ENCODE measurements at regions of chr18 and their contacts with region 1.

Region 1: GRCh38 chr18:8359076-8359475 is 250.2 kb upstream of the RAB12 start:
- DNase-seq: no peak
- H3K4me3 Mint-ChIP-seq: no peak overlapping the region
- H3K27ac Mint-ChIP-seq: no peak overlapping the region
- H3K4me1 Mint-ChIP-seq: no peaks in the 10 kb centered on the region
- H3K27me3 Mint-ChIP-seq: no peaks in the 10 kb centered on the region
- CTCF ChIP-seq: no peak

Region 2: GRCh38 chr18:8287199-8287885 is 71.7 kb before region 1 on chr18:
- CTCF ChIA-PET with region 1: interaction called, 12 read pairs
- POLR2A ChIA-PET with region 1: no interaction called
- intact Hi-C with region 1: no loop called
- DNase-seq: no peak
- H3K4me3 Mint-ChIP-seq: no peak overlapping the region
- H3K27ac Mint-ChIP-seq: no peak overlapping the region
- H3K4me1 Mint-ChIP-seq: no peaks in the 10 kb centered on the region
- H3K27me3 Mint-ChIP-seq: no peaks in the 10 kb centered on the region
- CTCF ChIP-seq: no peak

Region 3: GRCh38 chr18:8399138-8399537 is 40.1 kb after region 1 on chr18:
- CTCF ChIA-PET with region 1: no interaction called
- POLR2A ChIA-PET with region 1: no interaction called
- intact Hi-C with region 1: no loop called
- DNase-seq: no peak
- H3K4me3 Mint-ChIP-seq: no peak overlapping the region
- H3K27ac Mint-ChIP-seq: no peak overlapping the region
- H3K4me1 Mint-ChIP-seq: no peaks in the 10 kb centered on the region
- H3K27me3 Mint-ChIP-seq: no peaks in the 10 kb centered on the region
- CTCF ChIP-seq: no peak

Region 4: GRCh38 chr18:8813611-8814010 is 454.5 kb after region 1 on chr18:
- CTCF ChIA-PET with region 1: no interaction called
- POLR2A ChIA-PET with region 1: no interaction called
- intact Hi-C with region 1: no loop called
- DNase-seq: no peak
- H3K4me3 Mint-ChIP-seq: no peak overlapping the region
- H3K27ac Mint-ChIP-seq: no peak overlapping the region
- H3K4me1 Mint-ChIP-seq: peaks cover 34% of the 10 kb centered on the region
- H3K27me3 Mint-ChIP-seq: no peaks in the 10 kb centered on the region
- CTCF ChIP-seq: no peak